HCT116 (cell line): ENCODE measurements at regions of chr5 and their contacts with region 1.

Region 1: GRCh38 chr5:178859625-178860531 is at the start of gene ZNF354B:
- DNase-seq: peak; percentile 86
- ATAC-seq: peak; percentile 97
- H3K4me3 ChIP-seq: peak within 1 kb of the TSS; percentile 57 to 73
- H3K27ac ChIP-seq: peak within 1 kb of the TSS; percentile 71
- H3K4me1 ChIP-seq: peaks cover 5 to 10% of the 10 kb centered on the region in 2 experiments; a peak in 2 of 4 replicates
- H3K27me3 ChIP-seq: no peaks in the 10 kb centered on the region
- CTCF ChIP-seq: no peak
- POLR2A ChIP-seq: no peak
- RAD21 ChIP-seq: no peak
- total RNA-seq, gene ZNF354B: 11.6 TPM

Region 2: DNA sequence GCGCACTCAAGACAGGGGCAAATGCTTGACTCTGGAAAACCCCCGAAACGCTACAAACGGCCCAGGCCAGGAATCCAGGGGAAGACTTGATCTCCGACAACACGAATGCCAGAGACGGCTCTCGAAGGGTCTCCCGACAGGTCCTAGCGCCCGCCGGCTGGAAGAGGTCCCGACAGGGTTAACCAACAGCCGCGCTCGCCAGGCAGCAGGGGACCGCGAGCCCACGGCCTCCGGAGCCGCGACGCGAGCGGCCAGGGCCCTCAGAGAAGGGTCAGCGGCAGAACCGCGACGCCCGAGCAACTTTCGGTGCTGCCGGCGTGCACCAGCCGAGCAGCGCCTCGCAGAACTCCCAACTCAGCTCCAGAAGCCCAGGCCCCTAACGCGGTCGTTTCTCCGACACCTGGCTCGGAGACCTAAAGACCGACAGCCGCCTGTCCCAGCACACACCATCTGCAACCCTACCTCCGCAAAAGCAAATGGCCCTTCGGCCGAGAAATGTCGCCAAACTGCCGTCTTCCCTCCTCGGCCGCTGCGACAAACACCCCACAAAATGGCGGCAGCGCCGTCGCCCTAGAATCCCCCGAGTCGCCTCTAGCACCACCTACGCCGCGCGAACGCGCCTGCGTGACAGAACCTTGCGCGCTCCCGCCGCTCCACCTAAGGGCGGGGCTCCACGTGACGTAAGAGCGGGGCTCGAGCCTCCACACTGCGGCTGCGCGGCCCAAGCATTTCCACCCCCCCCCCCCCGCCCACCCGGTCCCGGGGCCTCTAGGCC is 233.2 kb before region 1 on chr5 and contains the start of gene CLK4:
- CTCF ChIA-PET with region 1: no interaction called
- POLR2A ChIA-PET with region 1: no interaction called
- RAD21 ChIA-PET with region 1: no interaction called
- intact Hi-C with region 1: loop called (anchors 10 kb)
- DNase-seq: peak; percentile 88
- ATAC-seq: peak; percentile 91
- H3K4me3 ChIP-seq: peak within 1 kb of the TSS; percentile 86 to 94
- H3K27ac ChIP-seq: peak within 1 kb of the TSS; percentile 84
- H3K4me1 ChIP-seq: peaks cover 11 to 30% of the 10 kb centered on the region in 2 experiments
- H3K27me3 ChIP-seq: no peaks in the 10 kb centered on the region
- CTCF ChIP-seq: no peak
- POLR2A ChIP-seq: peak; percentile 77
- RAD21 ChIP-seq: no peak
- total RNA-seq, gene CLK4: 9.8 TPM